Mammary epithelial cell (primary cell): ENCODE measurements at regions of chr9 and their contacts with region 1.

Region 1: GRCh38 chr9:37920471-37921167 is 16.7 kb upstream of the SLC25A51 start:
- DNase-seq: no peak
- H3K4me3 ChIP-seq: no peak overlapping the region
- H3K27ac ChIP-seq: no peak overlapping the region
- H3K4me1 ChIP-seq: peaks cover 29% of the 10 kb centered on the region
- H3K27me3 ChIP-seq: no peaks in the 10 kb centered on the region
- CTCF ChIP-seq: no peak

Region 2: GRCh38 chr9:37963936-37964739 is 43.5 kb after region 1 on chr9:
- CTCF ChIA-PET with region 1: no interaction called
- dilution Hi-C with region 1: no loop called
- in situ Hi-C with region 1: no loop called
- intact Hi-C with region 1: loop called (anchors 2 kb)
- DNase-seq: peak; percentile 91
- H3K4me3 ChIP-seq: no peak overlapping the region
- H3K27ac ChIP-seq: peak overlapping the region; percentile 77
- H3K4me1 ChIP-seq: peaks cover 62% of the 10 kb centered on the region
- H3K27me3 ChIP-seq: no peaks in the 10 kb centered on the region
- CTCF ChIP-seq: no peak